CD8-positive, alpha-beta memory T cell (primary cell): ENCODE measurements at regions of chr9 and their contacts with region 1.

Region 1: DNA sequence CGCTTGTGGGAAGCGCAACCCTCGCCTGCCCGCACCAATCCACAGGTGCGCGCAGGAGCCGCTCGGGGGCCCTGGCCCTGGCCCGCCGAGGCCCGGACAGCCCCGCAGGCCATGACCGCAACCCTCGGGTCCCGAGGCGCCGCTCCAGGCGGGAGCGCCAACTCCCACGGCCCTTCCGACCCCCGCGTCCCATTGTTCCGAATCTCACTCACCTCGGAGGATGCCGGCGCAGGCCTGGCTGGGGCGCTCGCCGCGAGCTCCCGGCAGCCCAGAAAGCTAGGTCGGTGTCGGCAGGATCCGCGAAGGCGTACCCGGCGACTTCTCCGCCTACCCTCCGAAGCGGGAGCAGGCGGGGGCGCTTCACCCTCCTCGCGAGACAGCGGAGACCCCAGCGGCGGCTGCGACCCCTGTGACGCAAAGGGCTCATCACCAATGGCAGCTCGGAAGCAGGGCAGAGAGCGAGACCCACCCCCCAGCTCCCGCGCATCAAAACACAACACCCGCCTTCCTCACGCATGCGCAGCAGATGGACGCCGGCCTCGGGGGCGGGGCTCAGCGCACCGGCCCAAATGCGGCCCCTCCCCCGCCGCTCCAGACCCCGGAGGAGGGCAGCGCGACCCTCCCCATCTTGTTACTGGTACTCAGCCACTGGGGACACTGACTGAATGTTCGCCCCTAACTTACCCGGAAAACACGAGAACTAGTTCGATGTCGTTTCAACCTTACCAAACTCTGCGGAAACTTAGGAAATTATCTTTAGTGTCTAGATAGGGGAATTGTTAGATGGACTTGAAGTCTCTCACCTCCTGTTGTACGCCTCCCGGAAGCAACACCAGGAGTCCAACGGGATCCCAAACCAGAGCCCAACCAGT is 1.3 kb upstream of the SMIM27 start:
- DNase-seq: peak; percentile 95 to 98 (median 96)
- H3K4me3 ChIP-seq: peak overlapping the region; percentile 83
- H3K4me3 Mint-ChIP-seq: peak overlapping the region; percentile 90 to 98 (median 93)
- H3K27ac ChIP-seq: peak overlapping the region; percentile 89
- H3K27ac Mint-ChIP-seq: peak overlapping the region; percentile 96 to 99 (median 98)
- H3K4me1 ChIP-seq: peaks cover 34% of the 10 kb centered on the region
- H3K4me1 Mint-ChIP-seq: peaks cover 53 to 82% (median 60%) of the 10 kb centered on the region in 3 donors
- H3K27me3 ChIP-seq: no peaks in the 10 kb centered on the region
- H3K27me3 Mint-ChIP-seq: no peaks in the 10 kb centered on the region

Region 2: DNA sequence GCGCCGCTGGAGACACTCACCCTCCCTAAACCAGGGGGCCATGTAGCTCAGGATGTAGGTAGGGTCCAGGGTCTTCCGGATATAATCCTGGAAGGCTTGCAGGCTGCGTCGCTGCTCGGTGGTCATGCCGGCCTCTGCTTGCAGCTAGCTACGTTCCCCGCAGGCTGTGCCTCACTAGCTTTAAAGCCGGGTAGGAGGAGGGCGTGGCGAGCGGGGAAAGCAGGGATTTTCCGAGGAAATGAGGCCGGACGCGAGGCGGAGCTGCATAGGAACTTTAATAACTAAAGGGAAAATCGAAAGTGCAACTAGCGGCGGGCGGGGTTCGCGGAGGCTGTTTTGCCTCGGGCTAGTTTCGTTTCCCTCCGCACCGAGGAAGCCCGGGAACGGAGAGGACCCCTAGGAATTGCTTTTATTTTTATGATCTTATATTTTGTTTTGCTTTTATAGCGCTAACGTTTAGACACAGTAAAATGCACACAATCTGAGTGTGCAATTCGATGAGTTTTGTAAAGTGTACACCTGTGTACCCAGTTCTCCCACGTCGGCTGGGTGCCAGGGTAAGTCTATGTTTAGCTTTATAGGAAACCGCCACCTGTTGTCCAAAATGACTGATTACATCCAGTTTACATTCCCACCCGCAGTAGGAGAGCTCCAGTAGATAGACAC is 24.6 kb before region 1 on chr9 and contains the start of gene RIGI:
- CTCF ChIA-PET with region 1: interaction called, 49 read pairs
- POLR2A ChIA-PET with region 1: interaction called, 19 read pairs
- DNase-seq: peak; percentile 79 to 89 (median 83)
- H3K4me3 ChIP-seq: peak within 1 kb of the TSS; percentile 90
- H3K4me3 Mint-ChIP-seq: peak within 1 kb of the TSS; percentile 86 to 98 (median 98)
- H3K27ac ChIP-seq: peak within 1 kb of the TSS; percentile 71
- H3K27ac Mint-ChIP-seq: peak within 1 kb of the TSS; percentile 78 to 99 (median 96)
- H3K4me1 ChIP-seq: peaks cover 28% of the 10 kb centered on the region
- H3K4me1 Mint-ChIP-seq: peaks cover 52 to 57% (median 54%) of the 10 kb centered on the region in 3 donors
- H3K27me3 ChIP-seq: no peaks in the 10 kb centered on the region
- H3K27me3 Mint-ChIP-seq: no peaks in the 10 kb centered on the region
- total RNA-seq, gene RIGI: 5.9 to 6.5 TPM

Region 3: DNA sequence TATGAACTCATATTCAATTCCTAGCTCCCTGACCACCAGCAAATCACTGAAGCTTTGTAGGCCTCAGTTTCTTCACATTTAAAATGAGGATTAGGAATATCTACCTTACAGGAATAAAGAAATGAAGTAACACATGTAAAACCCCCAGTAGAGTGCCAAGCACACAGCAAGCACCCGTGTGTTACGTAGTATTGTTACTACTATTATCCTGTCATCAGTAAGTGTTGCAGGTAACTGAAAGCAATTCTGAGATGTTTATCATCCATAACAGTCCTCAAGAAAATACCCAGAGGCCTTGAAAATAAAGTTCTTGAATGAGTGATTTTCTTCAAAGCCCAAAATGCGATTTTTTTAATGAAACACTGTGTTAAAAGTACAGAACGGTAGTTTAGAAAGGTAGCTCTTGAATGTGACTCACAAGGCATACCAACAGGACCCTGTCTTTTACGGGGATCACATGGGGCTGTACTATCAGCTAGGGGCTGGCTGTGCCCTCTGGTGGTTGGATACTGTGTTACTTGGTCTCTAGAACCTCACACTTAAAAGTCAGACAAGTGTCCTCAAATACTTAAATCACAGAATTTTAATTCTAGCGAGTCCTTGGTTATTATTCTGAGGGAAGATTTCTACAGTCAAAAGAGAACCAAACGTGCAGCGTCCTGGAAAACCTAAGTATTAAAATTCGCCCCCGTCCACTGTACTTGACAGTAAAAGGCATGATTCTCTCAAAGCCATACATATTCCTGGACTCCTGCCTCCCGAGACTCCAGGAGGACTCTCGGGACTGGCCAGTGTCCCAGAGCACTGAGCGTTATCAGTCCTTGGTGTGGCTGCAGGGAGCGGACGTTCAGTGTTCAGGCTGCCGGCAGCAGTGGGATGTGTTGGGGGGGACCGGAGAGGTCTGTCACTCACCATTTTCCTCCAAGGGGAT is 21.4 kb after region 1 on chr9:
- CTCF ChIA-PET with region 1: interaction called, 38 read pairs
- POLR2A ChIA-PET with region 1: interaction called, 45 read pairs
- DNase-seq: peak; percentile 56 to 86 (median 73)
- H3K4me3 ChIP-seq: peak overlapping the region; percentile 98
- H3K4me3 Mint-ChIP-seq: peak overlapping the region; percentile 98 to 100 (median 99)
- H3K27ac ChIP-seq: peak overlapping the region; percentile 92
- H3K27ac Mint-ChIP-seq: peak overlapping the region; percentile 96 to 99 (median 99)
- H3K4me1 ChIP-seq: peaks cover 21% of the 10 kb centered on the region
- H3K4me1 Mint-ChIP-seq: peaks cover 33 to 40% (median 35%) of the 10 kb centered on the region in 3 donors
- H3K27me3 ChIP-seq: no peaks in the 10 kb centered on the region
- H3K27me3 Mint-ChIP-seq: peaks cover 0 to 3% of the 10 kb centered on the region in 2 donors

Region 4: GRCh38 chr9:32579706-32580331 is 29.0 kb after region 1 on chr9:
- CTCF ChIA-PET with region 1: interaction called, 38 read pairs
- POLR2A ChIA-PET with region 1: no interaction called
- DNase-seq: peak; percentile 61 to 84 (median 74)
- H3K4me3 ChIP-seq: no peak overlapping the region
- H3K4me3 Mint-ChIP-seq: no peak overlapping the region
- H3K27ac ChIP-seq: no peak overlapping the region
- H3K27ac Mint-ChIP-seq: peak overlapping the region in 1 of 8 donors; percentile 25
- H3K4me1 ChIP-seq: no peaks in the 10 kb centered on the region
- H3K4me1 Mint-ChIP-seq: peaks cover 0 to 2% (median 0%) of the 10 kb centered on the region in 3 donors
- H3K27me3 ChIP-seq: peaks cover 3% of the 10 kb centered on the region
- H3K27me3 Mint-ChIP-seq: peaks cover 9 to 22% of the 10 kb centered on the region in 2 donors